ENCODE measurements at regions of chr11 and their contacts with region 1.

Region 1: DNA sequence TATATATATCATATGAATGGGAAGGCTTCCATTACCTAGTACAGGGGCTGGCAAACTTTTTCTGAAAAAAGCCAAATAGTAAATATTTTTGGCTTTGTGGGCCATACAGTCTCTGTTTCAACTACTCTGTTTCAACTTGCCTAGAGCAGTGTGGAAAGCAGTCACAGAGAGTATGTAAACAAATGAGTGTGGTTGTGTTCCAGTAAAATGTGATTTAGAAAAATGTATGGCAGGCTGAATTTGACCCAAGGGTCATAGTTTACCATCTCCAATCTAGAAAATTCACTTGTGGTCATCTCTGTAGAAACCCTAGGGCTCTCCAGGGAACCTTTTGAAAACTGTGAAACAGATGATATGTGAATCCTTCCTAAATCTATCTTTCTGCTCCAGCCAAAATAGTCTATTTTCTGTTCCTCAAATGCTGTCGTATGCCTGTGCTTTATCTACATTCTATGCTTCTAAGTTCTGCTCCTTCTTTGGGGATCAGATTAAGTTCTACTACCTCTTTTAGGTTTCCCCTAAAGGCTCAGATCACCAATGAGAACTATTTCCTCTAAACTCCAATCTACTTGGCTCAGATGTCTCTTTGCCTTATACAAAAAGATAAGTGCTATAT is 356.2 kb downstream of the METTL15 start:
- DNase-seq: peak; percentile 86
- ATAC-seq: peak; percentile 77
- H3K4me3 ChIP-seq: no peak overlapping the region
- H3K27ac ChIP-seq: peak overlapping the region; percentile 98
- H3K4me1 ChIP-seq: peaks cover 22% of the 10 kb centered on the region
- H3K27me3 ChIP-seq: no peaks in the 10 kb centered on the region
- CTCF ChIP-seq: no peak
- POLR2A ChIP-seq: no peak
- RAD21 ChIP-seq: no peak; the same call in none of the 2 replicates

Region 2: GRCh38 chr11:27934830-27935145 is 529.6 kb before region 1 on chr11:
- CTCF ChIA-PET with region 1: no interaction called
- POLR2A ChIA-PET with region 1: no interaction called
- dilution Hi-C with region 1: no loop called
- in situ Hi-C with region 1: no loop called
- intact Hi-C with region 1: loop called (anchors 10 kb)
- DNase-seq: peak; percentile 98
- ATAC-seq: peak; percentile 69
- H3K4me3 ChIP-seq: peak overlapping the region; percentile 11; the same call in 1 of the 2 replicates
- H3K27ac ChIP-seq: peak overlapping the region; percentile 90
- H3K4me1 ChIP-seq: peaks cover 6% of the 10 kb centered on the region
- H3K27me3 ChIP-seq: no peaks in the 10 kb centered on the region
- CTCF ChIP-seq: no peak
- POLR2A ChIP-seq: no peak; the same call in none of the 2 replicates
- RAD21 ChIP-seq: peak; percentile 29; the same call in 1 of the 2 replicates

Region 3: DNA sequence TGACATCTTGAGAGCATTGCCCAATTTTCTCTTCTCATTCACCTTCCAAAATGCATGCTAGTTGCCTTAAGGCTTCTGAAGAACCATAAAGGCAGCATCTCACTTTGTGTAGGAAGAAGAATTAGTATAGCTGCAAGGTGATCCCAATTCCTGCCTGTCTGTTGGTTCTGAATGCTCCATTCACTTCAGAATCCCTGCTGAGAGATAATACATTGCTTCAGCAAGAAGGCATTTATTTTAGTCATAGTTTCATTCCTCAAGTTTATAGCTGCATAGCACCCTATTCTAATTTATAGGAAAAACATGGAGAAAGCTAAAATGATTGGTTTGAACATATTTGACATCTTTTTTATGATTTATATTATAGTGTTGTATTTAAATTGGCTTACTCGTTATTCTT is 174.9 kb before region 1 on chr11:
- CTCF ChIA-PET with region 1: no interaction called
- POLR2A ChIA-PET with region 1: no interaction called
- dilution Hi-C with region 1: no loop called
- in situ Hi-C with region 1: no loop called
- intact Hi-C with region 1: no loop called
- DNase-seq: no peak
- ATAC-seq: no peak
- H3K4me3 ChIP-seq: no peak overlapping the region
- H3K27ac ChIP-seq: no peak overlapping the region
- H3K4me1 ChIP-seq: no peaks in the 10 kb centered on the region
- H3K27me3 ChIP-seq: no peaks in the 10 kb centered on the region
- CTCF ChIP-seq: no peak
- POLR2A ChIP-seq: no peak
- RAD21 ChIP-seq: no peak

Region 4: GRCh38 chr11:28529540-28530410 is 65.4 kb after region 1 on chr11:
- CTCF ChIA-PET with region 1: no interaction called
- POLR2A ChIA-PET with region 1: interaction called, 14 read pairs
- dilution Hi-C with region 1: no loop called
- in situ Hi-C with region 1: no loop called
- intact Hi-C with region 1: no loop called
- DNase-seq: peak; percentile 82
- ATAC-seq: peak; percentile 64
- H3K4me3 ChIP-seq: no peak overlapping the region
- H3K27ac ChIP-seq: peak overlapping the region; percentile 19; the same call in 1 of the 2 replicates
- H3K4me1 ChIP-seq: peaks cover 3% of the 10 kb centered on the region; the same call in 1 of the 2 replicates
- H3K27me3 ChIP-seq: no peaks in the 10 kb centered on the region
- CTCF ChIP-seq: peak; percentile 57
- POLR2A ChIP-seq: no peak
- RAD21 ChIP-seq: peak; percentile 59

Region 5: DNA sequence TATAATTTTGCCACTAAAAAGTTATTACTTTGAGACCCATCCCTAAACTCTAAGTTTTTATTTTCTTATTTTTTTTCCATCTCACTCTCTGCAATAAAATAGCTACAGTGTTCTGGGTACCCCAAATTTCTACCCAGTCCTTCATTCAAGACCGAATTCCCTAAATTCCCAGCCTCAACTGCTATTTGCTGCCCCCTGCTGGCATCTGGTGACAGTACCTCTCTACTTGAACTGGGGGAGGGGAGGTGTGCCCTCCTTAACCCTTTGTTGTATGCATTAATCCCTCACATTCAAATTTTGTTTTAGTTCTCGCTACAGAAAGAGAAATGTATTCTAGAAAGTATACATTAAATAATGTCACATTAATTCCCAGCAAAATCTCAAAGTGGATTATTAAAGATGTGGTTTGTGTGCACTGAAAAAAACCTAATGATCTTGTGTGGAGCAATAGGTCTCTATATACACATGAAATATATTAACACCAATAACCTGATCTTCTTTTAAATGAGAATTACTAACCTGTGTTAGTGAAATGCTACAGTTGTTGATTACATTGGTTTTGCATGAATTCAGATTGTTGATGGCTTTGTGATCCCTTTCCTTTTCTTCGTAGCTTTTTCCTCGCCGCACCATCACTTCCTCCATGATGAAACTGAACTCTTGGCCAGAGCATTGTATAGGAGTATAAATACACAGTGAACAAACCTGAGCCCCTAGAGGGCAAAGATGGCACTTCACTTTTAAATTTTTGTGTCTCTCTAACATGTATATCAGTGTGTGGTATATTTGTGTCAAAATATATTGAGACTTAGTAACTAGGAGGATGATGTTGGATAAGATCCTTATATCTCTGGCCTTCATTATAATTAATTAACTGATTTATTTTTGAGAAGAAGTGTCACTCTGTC is 233.8 kb after region 1 on chr11:
- CTCF ChIA-PET with region 1: interaction called, 5 read pairs
- POLR2A ChIA-PET with region 1: no interaction called
- dilution Hi-C with region 1: no loop called
- in situ Hi-C with region 1: no loop called
- intact Hi-C with region 1: loop called (anchors 1 kb)
- DNase-seq: peak; percentile 61
- ATAC-seq: peak; percentile 64
- H3K4me3 ChIP-seq: no peak overlapping the region
- H3K27ac ChIP-seq: peak overlapping the region; percentile 11; the same call in 1 of the 2 replicates
- H3K4me1 ChIP-seq: peaks cover 14% of the 10 kb centered on the region
- H3K27me3 ChIP-seq: no peaks in the 10 kb centered on the region
- CTCF ChIP-seq: peak; percentile 78
- POLR2A ChIP-seq: no peak
- RAD21 ChIP-seq: peak; percentile 81

Region 6: GRCh38 chr11:29159552-29160465 is 695.4 kb after region 1 on chr11:
- CTCF ChIA-PET with region 1: no interaction called
- POLR2A ChIA-PET with region 1: no interaction called
- dilution Hi-C with region 1: no loop called
- in situ Hi-C with region 1: no loop called
- intact Hi-C with region 1: loop called (anchors 1 kb)
- DNase-seq: peak; percentile 90
- ATAC-seq: peak; percentile 98
- H3K4me3 ChIP-seq: no peak overlapping the region
- H3K27ac ChIP-seq: peak overlapping the region; percentile 89
- H3K4me1 ChIP-seq: peaks cover 9% of the 10 kb centered on the region
- H3K27me3 ChIP-seq: no peaks in the 10 kb centered on the region
- CTCF ChIP-seq: peak; percentile 85
- POLR2A ChIP-seq: peak; percentile 17; the same call in 1 of the 2 replicates
- RAD21 ChIP-seq: peak; percentile 94

Region 7: GRCh38 chr11:29173660-29174062 is 709.3 kb after region 1 on chr11:
- CTCF ChIA-PET with region 1: no interaction called
- POLR2A ChIA-PET with region 1: no interaction called
- dilution Hi-C with region 1: no loop called
- in situ Hi-C with region 1: no loop called
- intact Hi-C with region 1: loop called (anchors 1 kb)
- DNase-seq: peak; percentile 99
- ATAC-seq: peak; percentile 86
- H3K4me3 ChIP-seq: no peak overlapping the region
- H3K27ac ChIP-seq: peak overlapping the region; percentile 99; the same call in 1 of the 2 replicates
- H3K4me1 ChIP-seq: peaks cover 6% of the 10 kb centered on the region
- H3K27me3 ChIP-seq: no peaks in the 10 kb centered on the region
- CTCF ChIP-seq: no peak
- POLR2A ChIP-seq: no peak
- RAD21 ChIP-seq: peak; percentile 19; the same call in 1 of the 2 replicates